ENCODE measurements at regions of chr22 and their contacts with region 1.

Region 1: GRCh38 chr22:31970490-31971444 is 26.4 kb downstream of the YWHAH start:
- DNase-seq: peak; percentile 94

Region 2: DNA sequence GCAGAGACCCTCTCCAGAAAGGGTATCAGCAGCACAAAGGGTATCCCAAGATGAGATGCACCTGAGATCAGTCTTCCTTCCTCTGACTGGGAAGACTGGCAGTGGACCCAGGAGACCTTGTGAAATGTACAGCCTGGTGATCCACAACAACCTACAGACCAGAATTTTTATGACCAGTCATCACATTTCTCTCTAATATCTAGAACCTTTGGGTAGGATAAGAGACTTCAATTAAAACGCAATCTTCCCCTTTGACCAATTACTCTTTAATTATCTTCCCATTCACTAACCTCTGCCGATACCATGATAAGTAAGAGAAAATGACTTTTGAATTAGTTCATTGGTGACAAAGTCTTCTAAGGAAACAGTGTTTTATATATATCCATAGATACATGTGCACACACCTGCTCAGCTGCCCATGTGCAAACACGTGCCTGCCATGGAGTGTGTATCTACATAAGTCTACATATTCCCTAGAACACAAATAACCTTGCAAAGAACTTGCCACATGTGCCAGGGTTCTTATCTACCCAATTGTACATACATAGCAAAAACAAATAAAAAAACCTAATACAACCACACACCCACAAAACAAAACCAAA is 28.1 kb after region 1 on chr22:
- intact Hi-C with region 1: loop called in 1 of 2 experiments (anchors 2 kb)
- DNase-seq: no peak

Region 3: DNA sequence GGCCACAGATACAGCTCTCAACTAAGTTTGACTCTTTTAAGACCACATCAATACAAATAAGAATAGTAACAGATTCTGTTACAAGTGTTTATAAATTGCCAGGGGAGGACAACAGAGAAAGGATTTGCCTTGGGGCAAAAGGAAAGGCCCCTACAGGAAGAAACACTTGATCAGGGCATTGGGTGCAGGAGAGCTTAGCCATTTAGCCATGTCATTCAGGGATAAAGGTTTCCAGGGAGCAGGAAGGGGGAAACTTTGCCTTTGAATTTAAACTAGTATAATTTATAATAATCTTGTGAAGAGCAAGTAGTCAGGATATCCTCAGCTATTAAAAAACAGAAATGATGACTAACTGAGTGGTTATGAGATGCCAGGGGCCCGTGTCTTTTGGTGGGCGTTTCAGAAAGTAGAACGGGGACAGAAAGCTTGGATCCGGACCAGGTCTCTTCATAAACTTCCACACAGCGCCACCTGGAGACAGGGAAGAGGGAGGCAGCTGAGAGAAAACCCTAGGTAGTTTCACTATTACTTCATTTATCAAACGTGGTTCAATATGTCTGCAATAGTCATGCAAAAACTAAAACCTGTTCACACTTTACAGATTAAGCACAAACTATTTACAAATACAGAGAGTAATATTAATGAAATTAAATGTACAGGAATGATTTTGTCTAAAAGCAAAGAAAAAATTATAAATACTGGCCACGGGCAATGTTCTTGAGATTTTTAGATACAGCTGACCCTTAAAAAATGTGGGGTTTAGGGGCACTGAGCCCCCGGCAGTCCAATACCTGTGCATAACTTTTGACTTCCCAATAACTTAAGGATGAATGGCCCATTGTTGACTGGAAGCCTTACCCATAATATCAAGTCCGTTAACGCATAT is 295.4 kb after region 1 on chr22:
- intact Hi-C with region 1: loop called (anchors 5 to 10 kb)
- DNase-seq: no peak

Region 4: DNA sequence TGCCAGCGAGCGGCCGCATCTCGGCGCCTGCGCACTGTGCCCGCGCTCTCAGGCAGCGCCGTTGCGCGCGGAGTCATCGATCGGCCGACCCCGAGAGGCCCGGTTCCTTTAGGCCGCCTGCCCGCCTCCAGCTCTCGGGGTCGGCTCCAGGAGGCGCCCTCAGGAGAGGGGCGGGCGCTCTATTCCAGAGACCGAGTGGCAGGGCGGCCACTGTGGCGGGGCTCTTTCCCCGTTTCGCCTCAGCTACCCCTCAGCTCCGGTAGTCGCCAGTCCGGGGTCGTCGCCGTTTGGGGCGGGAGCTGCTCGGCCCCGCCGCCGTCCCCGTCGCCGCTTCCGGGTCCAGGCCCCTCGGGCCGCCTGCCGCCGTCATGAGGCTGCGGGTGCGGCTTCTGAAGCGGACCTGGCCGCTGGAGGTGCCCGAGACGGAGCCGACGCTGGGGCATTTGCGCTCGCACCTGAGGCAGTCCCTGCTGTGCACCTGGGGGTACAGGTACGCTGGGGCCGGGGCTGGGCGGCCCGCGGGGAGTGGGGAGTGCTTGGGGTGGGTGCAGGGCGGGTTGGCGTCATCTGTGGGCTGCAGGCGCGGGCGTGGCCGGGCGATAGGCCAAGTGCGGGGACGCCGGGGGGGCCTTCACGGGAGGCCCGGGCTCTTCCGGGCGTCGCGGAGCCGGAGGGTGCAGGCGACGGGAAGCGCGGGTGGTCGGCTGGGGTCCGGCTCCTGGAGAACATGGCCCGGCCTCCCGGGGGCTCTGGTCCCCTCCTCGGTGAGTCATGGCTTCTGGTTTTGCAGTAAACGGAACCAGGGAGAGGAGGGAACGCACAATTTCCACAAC is 504.1 kb after region 1 on chr22 and contains the start of gene FBXO7:
- intact Hi-C with region 1: loop called in 1 of 2 experiments (anchors 5 kb)
- DNase-seq: peak; percentile 98
- total RNA-seq, gene FBXO7: 69.3 to 70.3 TPM

Measured in posterior vena cava (tissue), 2 donors.